Mammary epithelial cell (primary cell): ENCODE measurements at regions of chr10 and their contacts with region 1.

Region 1: GRCh38 chr10:70146489-70147258 is at the start of gene TYSND1:
- DNase-seq: peak; percentile 99
- H3K4me3 ChIP-seq: peak within 1 kb of the TSS; percentile 74 to 86 (median 79)
- H3K27ac ChIP-seq: peak within 1 kb of the TSS; percentile 82
- H3K4me1 ChIP-seq: peaks cover 18% of the 10 kb centered on the region
- H3K27me3 ChIP-seq: no peaks in the 10 kb centered on the region
- CTCF ChIP-seq: peak; percentile 63 to 88
- total RNA-seq, gene TYSND1: 21.7 to 30.3 TPM

Region 2: DNA sequence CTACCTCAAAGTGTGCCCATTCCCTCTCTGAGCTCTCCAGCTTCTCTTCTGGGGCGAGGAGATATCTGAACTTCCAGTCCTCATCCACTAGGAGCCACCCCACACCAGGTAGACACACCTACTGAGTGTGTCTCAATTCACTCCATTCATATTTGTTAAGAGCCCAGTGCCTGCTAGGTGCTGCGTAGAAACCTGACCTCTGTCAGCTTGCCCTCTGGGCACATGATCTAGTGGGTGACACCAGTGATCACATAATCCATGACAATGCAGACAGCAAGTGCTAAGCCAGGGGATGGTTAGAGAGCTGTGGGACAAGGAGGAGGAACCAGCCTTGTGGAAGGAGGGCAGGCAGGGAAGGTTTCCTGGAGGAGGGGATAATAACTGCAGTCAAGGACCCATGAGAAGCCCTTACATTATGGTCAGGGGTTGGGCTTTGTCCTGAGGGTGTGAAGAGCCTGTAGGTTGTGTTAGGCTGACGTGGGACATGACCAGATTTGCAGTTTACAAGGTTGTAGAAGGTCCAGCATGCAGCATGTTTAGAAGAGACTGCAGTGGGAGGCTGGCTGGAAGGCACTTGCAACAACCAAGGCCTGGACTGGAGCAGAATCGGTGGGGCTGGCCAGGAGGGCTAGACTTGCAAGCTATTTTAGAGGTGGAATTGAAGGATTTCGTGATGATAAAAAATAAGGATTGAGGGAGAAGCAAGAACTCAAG is 263.2 kb before region 1 on chr10:
- CTCF ChIA-PET with region 1: no interaction called
- dilution Hi-C with region 1: no loop called
- in situ Hi-C with region 1: no loop called
- intact Hi-C with region 1: loop called (anchors 1 kb)
- DNase-seq: peak; percentile 27
- H3K4me3 ChIP-seq: no peak overlapping the region
- H3K27ac ChIP-seq: no peak overlapping the region
- H3K4me1 ChIP-seq: no peaks in the 10 kb centered on the region
- H3K27me3 ChIP-seq: no peaks in the 10 kb centered on the region
- CTCF ChIP-seq: peak; percentile 50 to 74

Region 3: DNA sequence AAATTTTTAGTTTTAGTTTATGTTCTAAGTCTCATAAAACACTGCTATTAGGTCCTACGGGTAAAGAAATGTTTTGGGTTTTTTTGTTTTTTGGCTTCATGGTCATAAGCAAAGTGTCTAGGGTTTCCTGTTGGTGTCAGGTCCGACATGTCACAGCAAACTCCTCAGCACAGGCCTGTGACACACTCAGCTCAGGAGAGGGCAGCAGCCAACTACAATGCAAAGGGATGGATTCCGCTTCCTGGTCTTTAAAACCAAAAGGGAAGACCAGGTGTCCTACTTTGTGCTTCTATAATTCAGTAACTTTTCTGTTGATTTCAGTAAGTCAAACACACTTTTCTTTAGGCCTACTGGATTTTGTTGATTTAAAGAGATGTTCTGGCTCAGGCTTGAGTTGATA is 177.8 kb before region 1 on chr10:
- CTCF ChIA-PET with region 1: no interaction called
- dilution Hi-C with region 1: no loop called
- in situ Hi-C with region 1: no loop called
- intact Hi-C with region 1: loop called (anchors 1 kb)
- DNase-seq: peak; percentile 32
- H3K4me3 ChIP-seq: no peak overlapping the region
- H3K27ac ChIP-seq: no peak overlapping the region
- H3K4me1 ChIP-seq: peaks cover 4% of the 10 kb centered on the region
- H3K27me3 ChIP-seq: peaks cover 3% of the 10 kb centered on the region
- CTCF ChIP-seq: peak; percentile 29 to 60

Region 4: DNA sequence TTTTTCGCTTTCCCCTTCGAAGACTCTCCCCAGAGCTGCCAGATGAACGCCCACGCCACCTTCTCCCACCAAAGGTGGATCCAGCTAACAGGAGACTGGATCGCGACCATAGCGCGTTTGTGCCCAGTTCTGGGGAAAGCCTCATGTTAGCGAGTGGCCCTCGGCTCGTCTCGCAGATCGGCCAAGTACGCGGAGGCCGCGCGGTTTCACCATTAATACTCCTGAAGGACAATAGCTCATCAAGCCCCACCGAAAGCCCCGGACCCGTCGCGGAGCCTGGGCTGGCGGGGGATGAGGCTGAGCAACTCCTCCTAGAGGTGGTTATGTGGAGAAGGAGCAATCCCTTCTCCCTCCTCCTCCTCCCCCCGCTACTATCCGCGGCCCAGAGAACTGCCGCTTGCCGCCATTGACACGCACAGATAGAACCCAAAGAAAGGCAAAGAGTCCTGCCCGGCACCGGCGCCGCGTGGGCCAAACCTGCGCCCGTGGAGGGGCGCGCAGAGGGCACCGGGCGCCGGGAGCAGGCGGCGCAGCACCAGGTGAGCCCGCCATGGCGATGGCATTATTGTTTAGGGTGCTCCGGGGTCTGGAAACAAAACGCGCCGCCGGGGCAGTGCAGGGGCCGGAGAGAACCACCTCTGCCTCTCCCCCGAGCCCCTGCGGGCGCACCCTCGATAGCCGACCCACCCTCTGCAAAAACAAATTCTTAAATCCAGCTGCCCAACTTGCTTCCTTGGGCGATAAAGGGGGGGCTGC is 94.0 kb before region 1 on chr10 and contains the start of gene MACROH2A2:
- CTCF ChIA-PET with region 1: interaction called, 5 read pairs
- dilution Hi-C with region 1: no loop called
- in situ Hi-C with region 1: no loop called
- intact Hi-C with region 1: loop called (anchors 5 kb)
- DNase-seq: peak; percentile 72
- H3K4me3 ChIP-seq: peak within 1 kb of the TSS; percentile 70 to 96 (median 81)
- H3K27ac ChIP-seq: peak within 1 kb of the TSS; percentile 61
- H3K4me1 ChIP-seq: no peaks in the 10 kb centered on the region
- H3K27me3 ChIP-seq: no peaks in the 10 kb centered on the region
- CTCF ChIP-seq: peak; percentile 19 to 57
- total RNA-seq, gene MACROH2A2: 17.8 to 32.6 TPM

Region 5: GRCh38 chr10:70115948-70116682 is 30.6 kb before region 1 on chr10:
- CTCF ChIA-PET with region 1: interaction called, 24 read pairs
- dilution Hi-C with region 1: no loop called
- in situ Hi-C with region 1: no loop called
- intact Hi-C with region 1: loop called (anchors 1 kb)
- DNase-seq: peak; percentile 25
- H3K4me3 ChIP-seq: no peak overlapping the region
- H3K27ac ChIP-seq: no peak overlapping the region
- H3K4me1 ChIP-seq: no peaks in the 10 kb centered on the region
- H3K27me3 ChIP-seq: no peaks in the 10 kb centered on the region
- CTCF ChIP-seq: peak; percentile 83 to 84

Region 6: DNA sequence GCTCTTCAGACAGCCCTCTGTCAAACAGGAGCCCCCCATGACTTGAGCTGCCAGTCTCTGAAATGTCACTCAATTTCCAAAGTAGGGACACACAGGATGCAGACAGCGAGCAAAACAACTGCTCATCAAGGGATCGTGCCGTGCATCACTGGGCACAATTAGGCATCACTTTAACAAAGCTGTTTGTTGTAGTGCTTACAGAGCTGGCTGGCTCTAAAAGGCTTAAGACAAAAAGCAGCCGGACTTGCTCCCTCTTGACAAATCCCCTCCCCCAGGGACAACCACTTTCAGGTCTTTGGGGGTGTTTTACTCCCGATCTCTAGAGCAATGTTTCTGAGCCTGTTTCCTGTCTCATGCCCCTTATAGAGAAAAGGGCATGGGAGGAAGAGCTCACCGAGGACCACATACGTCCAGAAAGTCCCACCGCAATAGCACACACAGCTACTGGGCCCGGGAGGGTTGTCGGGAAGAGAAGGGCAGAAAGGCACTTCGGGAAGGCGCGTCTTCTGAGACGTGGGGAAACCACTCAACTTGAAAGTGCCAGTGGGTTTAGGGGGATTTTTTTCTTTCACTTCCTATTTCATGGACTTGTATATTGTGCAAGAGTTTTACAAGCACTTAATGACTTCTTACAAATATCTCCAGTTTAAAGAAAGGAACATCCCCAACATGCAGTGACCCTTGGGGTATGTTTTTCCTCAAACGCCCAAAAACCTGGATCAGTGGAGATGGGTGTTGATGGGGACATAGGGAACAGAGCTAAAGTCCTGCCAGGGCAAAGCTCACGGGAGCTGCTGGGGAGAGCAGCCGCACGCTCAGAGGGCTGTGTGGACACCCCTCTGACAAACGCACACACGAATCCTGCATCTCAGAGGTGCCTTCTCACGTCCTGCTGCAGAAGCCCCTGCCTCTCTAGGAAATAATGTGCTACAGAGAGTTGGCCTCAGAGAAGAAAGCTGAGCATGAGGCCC is 208.7 kb after region 1 on chr10:
- CTCF ChIA-PET with region 1: no interaction called
- dilution Hi-C with region 1: loop called (anchors 10 kb)
- in situ Hi-C with region 1: no loop called
- intact Hi-C with region 1: no loop called
- DNase-seq: no peak
- H3K4me3 ChIP-seq: no peak overlapping the region
- H3K27ac ChIP-seq: no peak overlapping the region
- H3K4me1 ChIP-seq: no peaks in the 10 kb centered on the region
- H3K27me3 ChIP-seq: no peaks in the 10 kb centered on the region
- CTCF ChIP-seq: no peak

Region 7: GRCh38 chr10:70381471-70382421 is 235.1 kb after region 1 on chr10:
- CTCF ChIA-PET with region 1: no interaction called
- dilution Hi-C with region 1: loop called (anchors 10 kb)
- in situ Hi-C with region 1: no loop called
- intact Hi-C with region 1: loop called (anchors 5 kb)
- DNase-seq: peak; percentile 39
- H3K4me3 ChIP-seq: peak overlapping the region; percentile 73 to 76 (median 75)
- H3K27ac ChIP-seq: peak overlapping the region; percentile 8
- H3K4me1 ChIP-seq: peaks cover 24% of the 10 kb centered on the region
- H3K27me3 ChIP-seq: no peaks in the 10 kb centered on the region
- CTCF ChIP-seq: no peak